ENCODE measurements at regions of chrX and their contacts with region 1.

Region 1: DNA sequence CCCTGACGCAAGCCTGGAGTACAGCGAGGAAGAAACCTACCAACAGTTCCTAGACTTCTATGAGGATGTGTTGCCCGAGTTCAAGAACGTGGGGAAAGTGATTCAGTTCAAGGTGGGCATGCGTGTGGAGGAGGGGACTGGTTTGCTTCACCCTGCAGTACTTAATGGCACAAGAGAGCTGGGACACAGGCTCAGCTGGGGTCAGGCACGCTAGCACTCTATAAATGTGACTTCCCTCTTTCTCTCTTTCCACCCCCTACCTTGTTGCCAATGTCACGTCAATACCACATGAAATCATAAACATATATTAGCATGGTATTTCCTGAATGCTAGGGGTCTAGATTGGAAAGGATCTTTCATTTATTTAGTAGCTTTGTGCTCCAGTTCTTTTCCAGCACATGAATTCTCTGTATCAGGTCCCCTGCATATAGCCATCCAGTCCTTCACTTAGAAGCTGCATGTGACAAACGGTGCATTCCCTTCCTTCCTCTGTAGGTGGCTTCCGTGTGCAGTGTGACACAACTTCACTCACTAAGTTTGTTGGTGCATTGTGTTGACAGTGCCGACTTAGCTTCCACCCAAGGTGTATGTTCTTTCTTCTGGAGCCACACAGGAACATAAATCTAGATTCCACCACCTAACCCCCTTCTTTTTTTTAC is 25.6 kb downstream of the ZRSR2 start:
- DNase-seq: peak; percentile 15
- H3K4me3 Mint-ChIP-seq: no peak overlapping the region
- H3K27ac Mint-ChIP-seq: peak overlapping the region; percentile 92
- H3K4me1 Mint-ChIP-seq: peaks cover 41% of the 10 kb centered on the region
- H3K27me3 Mint-ChIP-seq: no peaks in the 10 kb centered on the region

Region 2: DNA sequence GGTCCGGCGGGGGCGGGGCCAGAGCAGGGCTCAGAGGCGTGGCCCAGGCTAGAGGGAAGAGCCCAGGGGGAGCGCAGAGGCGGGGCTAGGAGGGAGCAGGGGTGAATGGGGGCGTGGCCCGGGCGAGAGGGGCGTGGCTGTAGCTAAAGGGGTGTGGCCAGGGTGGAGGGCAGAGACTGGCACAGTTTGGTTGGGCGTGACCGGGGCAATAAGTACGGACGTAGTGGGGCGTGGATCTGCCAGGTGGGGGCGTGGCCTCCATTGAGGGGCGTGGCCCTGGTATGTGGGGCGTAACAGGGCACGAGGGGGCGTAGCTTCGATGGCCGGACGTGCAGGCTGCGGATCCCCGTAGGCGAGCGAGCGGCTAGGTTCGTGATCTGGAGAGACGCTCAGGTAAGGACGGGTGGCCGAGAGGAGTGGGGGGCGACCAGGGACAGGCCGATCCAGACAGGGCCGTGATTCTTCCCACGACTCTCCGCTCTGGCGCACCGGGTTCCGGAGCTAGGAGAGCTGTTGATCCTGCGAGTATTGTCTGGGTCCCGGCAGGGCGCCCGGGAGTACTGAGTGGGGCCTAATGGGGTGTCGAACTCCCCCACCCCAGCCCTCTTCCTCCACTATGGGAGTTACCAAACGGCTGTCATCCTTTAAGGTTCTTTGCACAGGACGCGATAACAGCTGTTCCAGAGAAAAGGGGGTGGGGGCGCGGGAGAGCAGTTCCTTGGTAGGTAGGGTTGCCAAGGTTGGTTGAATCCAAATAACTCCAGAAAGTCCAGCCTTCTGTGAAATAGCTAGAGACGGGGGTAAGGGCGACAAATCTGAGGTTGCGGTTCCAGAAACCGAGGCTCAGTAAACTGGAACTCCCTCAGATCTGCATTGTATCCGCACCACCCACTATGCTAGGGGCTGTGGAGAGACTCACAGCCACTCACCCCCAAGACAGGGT is 77.7 kb before region 1 on chrX and contains the start of gene CA5B:
- intact Hi-C with region 1: loop called (anchors 2 kb)
- DNase-seq: peak; percentile 94
- H3K4me3 Mint-ChIP-seq: peak within 1 kb of the TSS; percentile 82
- H3K27ac Mint-ChIP-seq: peak within 1 kb of the TSS; percentile 75
- H3K4me1 Mint-ChIP-seq: peaks cover 23% of the 10 kb centered on the region
- H3K27me3 Mint-ChIP-seq: no peaks in the 10 kb centered on the region
- total RNA-seq, gene CA5B: 5.2 and 8.0 TPM in 2 replicates

Measured in activated T-helper 2 cell treated with anti-CD3 and anti-CD28 coated beads, Interferon-gamma antibody, Interleukin-2, Interleukin-4, amounts not matched to agents 10 μg/mL and 5 μg/mL and 100 μg/mL, durations not matched to agents 14 hours and 24 hours and 36 hours (primary cell).